ENCODE measurements at regions of chr4 and their contacts with region 1.

Region 1: GRCh38 chr4:34422472-34423175 is 1821.7 kb downstream of the ARAP2 start:
- DNase-seq: no peak
- H3K4me3 ChIP-seq: no peak overlapping the region
- H3K27ac ChIP-seq: no peak overlapping the region
- H3K4me1 ChIP-seq: no peaks in the 10 kb centered on the region
- H3K27me3 ChIP-seq: no peaks in the 10 kb centered on the region
- CTCF ChIP-seq: no peak

Region 2: GRCh38 chr4:32462944-32463343 is 1959.7 kb before region 1 on chr4:
- CTCF ChIA-PET with region 1: no interaction called
- dilution Hi-C with region 1: no loop called
- in situ Hi-C with region 1: no loop called
- intact Hi-C with region 1: loop called (anchors 10 kb)
- DNase-seq: no peak
- H3K4me3 ChIP-seq: no peak overlapping the region
- H3K27ac ChIP-seq: no peak overlapping the region
- H3K4me1 ChIP-seq: no peaks in the 10 kb centered on the region
- H3K27me3 ChIP-seq: no peaks in the 10 kb centered on the region
- CTCF ChIP-seq: peak; percentile 59 to 61

Region 3: DNA sequence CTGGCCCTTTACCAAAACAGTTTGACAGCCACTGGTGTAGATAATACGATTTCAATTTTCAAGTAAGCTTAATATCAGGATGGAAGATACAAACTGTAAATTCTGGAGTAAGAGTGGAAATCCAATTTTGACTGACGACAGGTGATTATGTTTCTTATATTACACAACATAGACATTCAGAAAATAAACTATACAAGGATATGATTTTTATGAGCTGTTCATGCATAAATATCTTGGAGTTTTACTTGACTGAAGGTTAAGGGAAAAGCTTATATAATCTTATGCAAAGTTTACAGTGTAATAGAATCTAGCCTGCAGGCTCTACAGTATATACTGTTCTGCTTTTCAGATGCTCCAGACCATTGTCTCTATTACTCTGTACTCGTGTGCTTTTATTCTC is 149.4 kb after region 1 on chr4:
- CTCF ChIA-PET with region 1: no interaction called
- dilution Hi-C with region 1: no loop called
- in situ Hi-C with region 1: no loop called
- intact Hi-C with region 1: no loop called
- DNase-seq: no peak
- H3K4me3 ChIP-seq: no peak overlapping the region
- H3K27ac ChIP-seq: no peak overlapping the region
- H3K4me1 ChIP-seq: no peaks in the 10 kb centered on the region
- H3K27me3 ChIP-seq: no peaks in the 10 kb centered on the region
- CTCF ChIP-seq: no peak